Activated B cell treated with CpG ODN at 0.5 μM for 24 hours (primary cell): ENCODE measurements at regions of chr6 and their contacts with region 1.

Region 1: DNA sequence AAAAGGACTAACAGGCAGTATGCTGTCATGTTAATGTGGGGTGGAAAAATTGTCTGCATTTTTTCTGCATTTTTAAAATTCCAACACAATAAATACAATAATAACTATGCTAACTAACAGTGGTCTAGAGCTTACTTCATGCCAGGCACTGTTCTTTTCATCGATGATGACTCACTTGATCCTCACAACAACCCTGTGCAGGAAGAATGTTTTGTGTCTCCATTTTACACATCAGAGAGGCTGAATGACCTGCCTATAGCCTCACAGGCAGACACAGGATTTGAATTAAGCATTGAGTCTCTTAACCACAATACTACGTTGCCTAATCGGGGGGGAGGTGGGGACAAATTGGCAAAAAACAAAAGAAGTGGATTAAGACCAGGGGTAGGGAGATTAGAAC is 26.9 kb upstream of the FANCE start:
- DNase-seq: no peak
- ATAC-seq: no peak
- H3K4me3 Mint-ChIP-seq: no peak overlapping the region
- H3K27ac Mint-ChIP-seq: no peak overlapping the region
- H3K4me1 Mint-ChIP-seq: peaks cover 12% of the 10 kb centered on the region
- H3K27me3 Mint-ChIP-seq: no peaks in the 10 kb centered on the region
- CTCF ChIP-seq: no peak

Region 2: DNA sequence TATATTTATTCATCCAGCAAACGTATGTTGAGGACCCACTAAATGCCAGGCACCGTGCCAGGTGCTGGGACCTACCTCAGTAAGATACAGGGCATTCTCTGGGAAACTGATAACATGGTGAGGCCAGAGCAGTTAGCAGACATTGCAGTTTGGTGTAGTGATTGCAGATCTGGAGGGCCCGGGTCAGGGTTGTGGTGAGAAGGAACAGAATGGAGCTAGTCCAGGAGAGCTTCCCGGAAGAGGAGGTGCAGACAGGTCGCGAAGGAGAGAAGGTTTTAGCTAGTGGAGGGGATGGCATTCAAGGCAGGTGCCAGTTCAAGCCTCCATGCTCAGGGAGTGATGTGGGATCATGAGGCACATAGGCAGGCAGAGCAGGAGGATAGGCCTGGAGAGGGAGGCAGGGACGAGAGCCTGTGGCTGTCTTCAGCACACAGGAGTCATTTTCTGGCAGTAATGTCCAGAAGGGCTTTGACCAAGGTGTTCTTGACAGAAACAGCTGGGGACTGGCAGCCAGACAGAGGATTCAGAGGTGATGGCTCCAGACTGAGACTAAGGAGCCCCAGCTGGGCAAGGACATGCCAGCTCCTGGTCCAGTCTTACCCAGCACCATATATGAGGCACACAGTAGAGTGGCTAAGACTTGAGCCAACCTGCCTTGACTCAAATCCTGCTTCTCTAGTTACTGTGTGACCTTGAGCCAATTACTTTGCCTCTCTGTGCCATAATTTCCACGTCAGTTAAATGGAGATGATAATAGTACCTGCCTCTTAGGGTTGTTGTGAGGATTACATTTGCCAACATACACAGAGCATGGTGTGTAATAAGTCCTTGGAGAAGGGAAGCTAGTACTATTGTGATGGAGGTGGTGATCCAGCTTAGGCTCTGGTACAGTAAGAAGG is 21.5 kb before region 1 on chr6:
- CTCF ChIA-PET with region 1: no interaction called
- POLR2A ChIA-PET with region 1: interaction called, 10 read pairs
- intact Hi-C with region 1: no loop called
- DNase-seq: no peak
- ATAC-seq: no peak
- H3K4me3 Mint-ChIP-seq: no peak overlapping the region
- H3K27ac Mint-ChIP-seq: no peak overlapping the region
- H3K4me1 Mint-ChIP-seq: no peaks in the 10 kb centered on the region
- H3K27me3 Mint-ChIP-seq: no peaks in the 10 kb centered on the region
- CTCF ChIP-seq: no peak